Naive thymus-derived CD4-positive, alpha-beta T cell (primary cell): ENCODE measurements at regions of chr21 and their contacts with region 1.

Region 1: DNA sequence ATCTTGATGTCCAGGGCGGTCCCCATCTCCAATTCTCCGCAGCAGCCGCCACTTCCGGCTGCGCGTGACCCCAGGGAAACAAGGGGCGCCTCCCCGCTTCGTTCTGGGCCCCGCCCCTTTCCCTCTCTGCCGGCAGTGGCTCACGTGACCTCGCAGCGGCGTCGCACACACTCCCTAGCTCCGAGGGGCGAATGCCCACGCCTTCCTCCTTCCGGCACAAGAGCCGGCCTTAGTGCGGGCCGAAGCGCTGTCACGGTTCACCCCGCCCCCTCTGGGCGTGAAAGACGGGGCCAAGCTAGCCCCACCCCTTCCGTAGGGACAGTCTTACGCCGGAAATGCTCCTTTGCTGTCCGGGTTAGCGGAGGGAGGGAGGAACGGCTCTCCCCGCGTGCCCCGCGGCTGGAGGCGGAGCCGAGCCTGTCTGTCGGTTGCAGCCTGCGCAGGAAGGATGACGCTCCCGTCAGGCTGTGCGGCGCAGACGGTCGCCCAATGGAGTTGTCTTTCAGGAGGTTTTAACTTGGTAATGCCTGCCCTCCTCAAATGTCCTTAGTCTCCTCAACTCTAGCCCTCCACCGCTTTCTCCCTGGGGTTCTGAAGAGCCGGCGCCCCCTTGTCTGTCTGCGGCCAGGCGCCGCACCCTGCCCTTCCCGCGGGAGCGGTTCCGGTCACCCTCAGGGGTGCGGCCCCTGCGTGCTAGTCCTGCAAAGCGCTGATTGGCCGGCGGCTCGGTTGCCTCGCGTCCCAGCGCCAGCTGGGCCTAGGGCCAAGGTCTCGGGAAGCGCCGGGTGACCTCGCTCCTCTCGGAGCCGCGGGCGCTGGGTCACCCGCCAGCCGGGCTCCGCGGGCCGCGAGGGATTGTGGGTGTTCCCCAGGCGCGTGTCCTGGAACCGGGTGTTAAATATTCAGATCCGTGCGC is at the start of gene VPS26C:
- DNase-seq: peak; percentile 91 to 98 (median 97)
- ATAC-seq: peak; percentile 93
- H3K4me3 ChIP-seq: peak within 1 kb of the TSS; percentile 95
- H3K4me3 Mint-ChIP-seq: peak within 1 kb of the TSS; percentile 88 to 96 (median 94)
- H3K27ac ChIP-seq: peak within 1 kb of the TSS; percentile 90
- H3K27ac Mint-ChIP-seq: peak within 1 kb of the TSS; percentile 94 to 99 (median 98)
- H3K4me1 ChIP-seq: peaks cover 5 to 7% of the 10 kb centered on the region in 2 donors
- H3K4me1 Mint-ChIP-seq: peaks cover 14 to 62% (median 46%) of the 10 kb centered on the region in 7 donors
- H3K27me3 ChIP-seq: no peaks in the 10 kb centered on the region
- H3K27me3 Mint-ChIP-seq: peaks cover 0 to 11% (median 0%) of the 10 kb centered on the region in 5 donors
- total RNA-seq, gene VPS26C: 46.8 to 83.5 (median 77.7) TPM

Region 2: DNA sequence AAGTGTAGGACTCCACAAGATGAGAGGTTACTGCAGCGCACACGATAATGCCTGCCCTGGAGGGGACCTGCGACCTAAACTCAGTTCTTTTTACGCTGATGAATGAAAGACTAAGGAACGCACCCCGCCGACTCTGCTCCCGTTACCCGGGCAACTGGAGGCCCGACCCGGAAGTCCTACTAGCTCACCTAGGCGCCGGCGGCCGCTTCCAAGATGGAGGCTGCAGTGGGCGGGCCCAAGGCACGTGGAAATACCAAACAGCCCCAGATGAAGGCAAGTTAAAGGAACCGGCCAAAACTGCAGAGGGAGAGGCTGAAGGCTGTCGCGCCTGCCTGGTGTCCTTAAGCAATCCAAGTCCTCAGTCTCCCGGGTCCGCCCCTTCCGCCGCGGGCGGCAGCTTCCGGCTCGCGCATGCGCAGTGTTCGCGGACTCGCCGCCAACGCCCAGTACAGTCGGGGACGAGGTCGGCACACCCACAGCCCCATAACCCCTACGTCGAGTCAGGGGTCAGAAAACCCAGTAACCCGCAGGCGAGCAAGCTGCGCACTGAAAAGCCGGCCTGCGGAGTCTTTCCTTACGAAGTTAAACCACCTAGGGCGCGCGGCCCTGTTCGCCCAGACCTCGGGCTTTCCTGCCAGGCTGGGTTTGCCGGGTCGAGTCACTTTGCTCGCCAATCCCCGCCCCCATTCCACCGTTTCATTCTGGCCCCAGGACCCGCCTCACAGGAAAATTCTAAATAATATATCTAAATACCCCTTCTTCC is 1207.2 kb before region 1 on chr21 and contains the start of gene SETD4:
- CTCF ChIA-PET with region 1: no interaction called
- POLR2A ChIA-PET with region 1: no interaction called
- intact Hi-C with region 1: loop called (anchors 10 kb)
- DNase-seq: peak; percentile 91 to 97 (median 94)
- ATAC-seq: peak; percentile 93
- H3K4me3 ChIP-seq: peak within 1 kb of the TSS; percentile 80
- H3K4me3 Mint-ChIP-seq: peak within 1 kb of the TSS; percentile 88 to 98 (median 96)
- H3K27ac ChIP-seq: peak within 1 kb of the TSS; percentile 89
- H3K27ac Mint-ChIP-seq: peak within 1 kb of the TSS; percentile 96 to 98 (median 97)
- H3K4me1 ChIP-seq: no peaks in the 10 kb centered on the region
- H3K4me1 Mint-ChIP-seq: peaks cover 2 to 38% (median 24%) of the 10 kb centered on the region in 7 donors
- H3K27me3 ChIP-seq: no peaks in the 10 kb centered on the region
- H3K27me3 Mint-ChIP-seq: peaks cover 0 to 4% (median 0%) of the 10 kb centered on the region in 5 donors
- total RNA-seq, gene SETD4: 17.1 to 31.5 (median 20.9) TPM

Region 3: DNA sequence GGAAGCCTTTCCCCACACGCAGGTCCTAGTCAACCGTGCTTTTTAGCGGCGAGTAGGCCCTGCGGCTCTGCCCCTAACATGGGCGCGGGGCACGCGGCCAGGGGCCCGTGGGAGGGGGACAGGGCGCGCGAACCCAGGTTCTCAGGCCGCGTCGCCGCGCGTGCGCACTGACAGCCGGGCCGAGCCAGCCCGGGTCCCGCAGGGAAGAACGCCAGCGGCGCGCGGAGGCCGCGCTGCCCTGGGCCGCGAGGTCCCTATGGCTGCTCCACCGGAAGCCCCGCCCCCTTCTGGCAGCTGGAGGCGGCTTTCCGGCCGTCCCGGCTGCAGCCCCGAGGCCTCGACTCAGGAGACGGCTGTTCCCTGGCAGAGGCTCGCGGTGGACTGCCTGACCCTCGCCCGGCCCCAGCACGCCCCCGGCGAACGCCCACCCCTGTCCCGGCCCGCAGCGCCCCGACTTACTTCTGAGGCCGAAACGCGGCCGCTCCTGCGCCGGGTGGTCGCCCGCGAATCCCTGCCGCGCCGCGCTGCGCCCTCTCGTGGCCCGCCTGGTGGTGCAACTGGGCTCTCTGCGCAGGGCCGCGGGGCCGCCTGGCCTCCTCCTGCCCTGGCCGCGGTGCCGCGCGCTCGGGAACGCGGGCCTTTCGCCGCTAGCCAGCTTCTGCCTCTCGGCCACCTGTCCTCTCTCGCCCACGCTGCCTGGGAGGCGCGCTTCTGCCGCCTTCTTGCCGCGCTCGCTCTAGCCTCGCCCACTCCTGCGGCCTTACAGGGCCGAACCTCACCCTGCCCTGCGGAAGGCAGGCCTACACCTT is 277.6 kb before region 1 on chr21:
- CTCF ChIA-PET with region 1: no interaction called
- POLR2A ChIA-PET with region 1: interaction called, 3 read pairs
- intact Hi-C with region 1: loop called in 1 of 2 experiments (anchors 5 kb)
- DNase-seq: peak; percentile 63 to 95 (median 74)
- ATAC-seq: peak; percentile 90
- H3K4me3 ChIP-seq: peak overlapping the region; percentile 66
- H3K4me3 Mint-ChIP-seq: peak overlapping the region; percentile 83 to 95 (median 90)
- H3K27ac ChIP-seq: peak overlapping the region; percentile 69
- H3K27ac Mint-ChIP-seq: peak overlapping the region; percentile 71 to 94 (median 87)
- H3K4me1 ChIP-seq: peaks cover 0 to 4% of the 10 kb centered on the region in 2 donors
- H3K4me1 Mint-ChIP-seq: peaks cover 4 to 36% (median 28%) of the 10 kb centered on the region in 7 donors
- H3K27me3 ChIP-seq: no peaks in the 10 kb centered on the region
- H3K27me3 Mint-ChIP-seq: peaks cover 0 to 3% (median 0%) of the 10 kb centered on the region in 5 donors

Region 4: GRCh38 chr21:37220981-37221664 is 46.4 kb before region 1 on chr21:
- CTCF ChIA-PET with region 1: interaction called, 3 read pairs
- POLR2A ChIA-PET with region 1: interaction called, 12 read pairs
- intact Hi-C with region 1: loop called (anchors 1 kb)
- DNase-seq: peak; percentile 76 to 95 (median 88)
- ATAC-seq: peak; percentile 90
- H3K4me3 ChIP-seq: peak overlapping the region; percentile 83
- H3K4me3 Mint-ChIP-seq: peak overlapping the region; percentile 85 to 95 (median 92)
- H3K27ac ChIP-seq: peak overlapping the region; percentile 81
- H3K27ac Mint-ChIP-seq: peak overlapping the region; percentile 85 to 95 (median 91)
- H3K4me1 ChIP-seq: peaks cover 25 to 33% of the 10 kb centered on the region in 2 donors
- H3K4me1 Mint-ChIP-seq: peaks cover 17 to 65% (median 56%) of the 10 kb centered on the region in 7 donors
- H3K27me3 ChIP-seq: no peaks in the 10 kb centered on the region
- H3K27me3 Mint-ChIP-seq: no peaks in the 10 kb centered on the region

Region 5: DNA sequence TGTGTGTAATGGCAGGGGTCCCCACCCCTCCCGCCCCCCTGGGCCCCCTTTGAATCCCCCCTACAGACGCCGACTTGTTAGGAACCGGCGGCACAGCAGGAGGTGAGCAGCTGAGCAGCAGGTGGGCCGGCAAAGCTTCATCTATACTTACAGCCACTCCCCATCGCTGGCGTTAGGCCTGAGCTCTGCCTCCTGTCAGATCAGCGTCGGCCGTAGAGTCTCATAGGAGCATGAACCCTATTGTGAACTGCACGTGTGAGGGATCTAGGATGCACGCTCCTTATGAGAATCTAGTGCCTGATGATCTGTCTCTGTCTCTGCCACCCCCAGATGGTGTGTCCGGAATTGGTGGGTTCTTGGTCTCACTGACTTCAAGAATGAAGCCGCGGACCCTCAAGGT is 14.5 kb after region 1 on chr21:
- CTCF ChIA-PET with region 1: no interaction called
- POLR2A ChIA-PET with region 1: interaction called, 7 read pairs
- intact Hi-C with region 1: loop called in 1 of 2 experiments (anchors 1 kb)
- DNase-seq: peak in 1 of 9 donors; percentile 9
- ATAC-seq: peak; percentile 60
- H3K4me3 ChIP-seq: no peak overlapping the region
- H3K4me3 Mint-ChIP-seq: peak overlapping the region; percentile 52 to 94 (median 80)
- H3K27ac ChIP-seq: no peak overlapping the region
- H3K27ac Mint-ChIP-seq: peak overlapping the region in 8 of 9 donors; percentile 24 to 92 (median 76)
- H3K4me1 ChIP-seq: no peaks in the 10 kb centered on the region
- H3K4me1 Mint-ChIP-seq: peaks cover 0 to 14% (median 0%) of the 10 kb centered on the region in 7 donors
- H3K27me3 ChIP-seq: no peaks in the 10 kb centered on the region
- H3K27me3 Mint-ChIP-seq: no peaks in the 10 kb centered on the region

Region 6: GRCh38 chr21:37319551-37319950 is 52.0 kb after region 1 on chr21:
- CTCF ChIA-PET with region 1: no interaction called
- POLR2A ChIA-PET with region 1: no interaction called
- intact Hi-C with region 1: no loop called
- DNase-seq: no peak
- ATAC-seq: no peak
- H3K4me3 ChIP-seq: no peak overlapping the region
- H3K4me3 Mint-ChIP-seq: no peak overlapping the region
- H3K27ac ChIP-seq: no peak overlapping the region
- H3K27ac Mint-ChIP-seq: no peak overlapping the region
- H3K4me1 ChIP-seq: no peaks in the 10 kb centered on the region
- H3K4me1 Mint-ChIP-seq: no peaks in the 10 kb centered on the region
- H3K27me3 ChIP-seq: no peaks in the 10 kb centered on the region
- H3K27me3 Mint-ChIP-seq: peaks cover 0 to 16% (median 0%) of the 10 kb centered on the region in 5 donors

Region 7: GRCh38 chr21:37463083-37463801 is 195.7 kb after region 1 on chr21:
- CTCF ChIA-PET with region 1: no interaction called
- POLR2A ChIA-PET with region 1: interaction called, 3 read pairs
- intact Hi-C with region 1: loop called (anchors 1 to 2 kb)
- DNase-seq: peak in 6 of 9 donors; percentile 20 to 45 (median 31)
- ATAC-seq: peak; percentile 85
- H3K4me3 ChIP-seq: no peak overlapping the region
- H3K4me3 Mint-ChIP-seq: peak overlapping the region in 9 of 10 donors; percentile 3 to 80 (median 67)
- H3K27ac ChIP-seq: no peak overlapping the region
- H3K27ac Mint-ChIP-seq: peak overlapping the region; percentile 24 to 93 (median 81)
- H3K4me1 ChIP-seq: peaks cover 37 to 39% of the 10 kb centered on the region in 2 donors
- H3K4me1 Mint-ChIP-seq: peaks cover 56 to 98% (median 87%) of the 10 kb centered on the region in 7 donors
- H3K27me3 ChIP-seq: no peaks in the 10 kb centered on the region
- H3K27me3 Mint-ChIP-seq: no peaks in the 10 kb centered on the region

Region 8: GRCh38 chr21:37582590-37582989 is 315.1 kb after region 1 on chr21:
- CTCF ChIA-PET with region 1: no interaction called
- POLR2A ChIA-PET with region 1: no interaction called
- intact Hi-C with region 1: no loop called
- DNase-seq: no peak
- ATAC-seq: no peak
- H3K4me3 ChIP-seq: no peak overlapping the region
- H3K4me3 Mint-ChIP-seq: no peak overlapping the region
- H3K27ac ChIP-seq: no peak overlapping the region
- H3K27ac Mint-ChIP-seq: no peak overlapping the region
- H3K4me1 ChIP-seq: no peaks in the 10 kb centered on the region
- H3K4me1 Mint-ChIP-seq: no peaks in the 10 kb centered on the region
- H3K27me3 ChIP-seq: no peaks in the 10 kb centered on the region
- H3K27me3 Mint-ChIP-seq: peaks cover 6 to 18% (median 13%) of the 10 kb centered on the region in 5 donors